Activated CD8-positive, alpha-beta T cell treated with anti-CD3 and anti-CD28 coated beads, Interleukin-2, amount 10 ng/mL, durations not matched to agents 7 days and 5 days (primary cell): ENCODE measurements at regions of chr20 and their contacts with region 1.

Region 1: GRCh38 chr20:35994994-35995453 is 26.6 kb downstream of the CNBD2 start:
- DNase-seq: peak; percentile 85
- ATAC-seq: peak; percentile 88
- H3K4me3 Mint-ChIP-seq: no peak overlapping the region
- H3K27ac Mint-ChIP-seq: no peak overlapping the region
- H3K4me1 Mint-ChIP-seq: peaks cover 2% of the 10 kb centered on the region
- H3K27me3 Mint-ChIP-seq: peaks cover 8% of the 10 kb centered on the region

Region 2: DNA sequence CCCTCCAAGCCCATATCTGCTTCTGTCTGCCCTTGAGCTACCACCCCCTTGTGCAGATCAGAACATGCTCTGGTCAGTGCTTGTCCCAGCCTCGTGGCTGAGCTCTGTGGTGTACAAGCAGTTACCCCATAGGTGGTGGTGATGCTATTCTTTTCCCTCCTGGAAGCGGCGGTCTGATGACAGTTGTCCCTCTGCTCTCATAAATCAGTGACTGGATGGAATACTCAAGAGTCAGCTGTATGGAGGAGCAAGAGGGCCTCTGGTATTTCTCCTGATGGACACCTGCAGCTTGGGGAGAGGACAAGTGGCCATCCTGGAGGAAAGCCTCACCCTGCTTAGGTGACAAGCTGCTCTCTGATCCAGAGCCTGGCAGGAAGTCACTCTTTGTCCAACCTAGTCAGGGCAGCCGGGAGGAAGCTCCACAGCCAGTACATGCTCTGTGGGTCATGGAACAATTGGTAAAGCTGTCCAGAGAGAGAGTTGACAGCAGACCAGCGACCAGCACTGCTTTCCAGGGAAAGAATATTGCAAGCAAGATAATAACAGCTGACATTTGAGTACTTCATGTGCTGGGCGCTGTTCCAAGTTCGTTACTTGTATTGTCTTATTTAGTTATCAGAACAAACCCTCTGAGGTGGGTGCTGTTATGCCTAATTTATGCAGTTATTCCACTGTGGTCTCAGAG is 87.9 kb before region 1 on chr20:
- CTCF ChIA-PET with region 1: no interaction called
- POLR2A ChIA-PET with region 1: no interaction called
- DNase-seq: no peak
- ATAC-seq: no peak
- H3K4me3 Mint-ChIP-seq: no peak overlapping the region
- H3K27ac Mint-ChIP-seq: no peak overlapping the region
- H3K4me1 Mint-ChIP-seq: peaks cover 12% of the 10 kb centered on the region
- H3K27me3 Mint-ChIP-seq: no peaks in the 10 kb centered on the region

Region 3: DNA sequence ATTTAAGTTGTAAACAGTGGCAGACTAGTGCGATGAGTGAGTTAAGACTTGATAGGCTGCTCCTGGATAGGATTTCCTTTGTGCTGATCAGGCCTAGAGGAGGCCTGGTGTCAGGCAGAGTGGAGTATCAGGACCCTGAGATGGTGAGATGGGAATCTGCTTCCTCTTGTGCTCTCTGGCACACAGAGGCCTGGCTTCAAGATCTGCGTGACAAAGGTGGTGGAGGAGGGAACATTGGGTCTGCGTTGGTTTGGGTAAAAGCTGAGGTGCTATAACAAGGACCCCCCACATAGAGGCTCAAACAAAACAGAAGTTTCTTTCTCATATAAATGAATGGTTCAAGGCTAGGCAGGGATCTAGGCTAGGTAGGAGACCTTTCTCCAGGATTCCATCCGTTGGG is 61.0 kb before region 1 on chr20:
- CTCF ChIA-PET with region 1: no interaction called
- POLR2A ChIA-PET with region 1: no interaction called
- DNase-seq: no peak
- ATAC-seq: no peak
- H3K4me3 Mint-ChIP-seq: no peak overlapping the region
- H3K27ac Mint-ChIP-seq: no peak overlapping the region
- H3K4me1 Mint-ChIP-seq: peaks cover 18% of the 10 kb centered on the region
- H3K27me3 Mint-ChIP-seq: no peaks in the 10 kb centered on the region

Region 4: GRCh38 chr20:35963878-35964277 is 31.1 kb before region 1 on chr20:
- CTCF ChIA-PET with region 1: interaction called, 12 read pairs
- POLR2A ChIA-PET with region 1: no interaction called
- DNase-seq: no peak
- ATAC-seq: no peak
- H3K4me3 Mint-ChIP-seq: no peak overlapping the region
- H3K27ac Mint-ChIP-seq: no peak overlapping the region
- H3K4me1 Mint-ChIP-seq: peaks cover 2% of the 10 kb centered on the region
- H3K27me3 Mint-ChIP-seq: peaks cover 4% of the 10 kb centered on the region

Region 5: DNA sequence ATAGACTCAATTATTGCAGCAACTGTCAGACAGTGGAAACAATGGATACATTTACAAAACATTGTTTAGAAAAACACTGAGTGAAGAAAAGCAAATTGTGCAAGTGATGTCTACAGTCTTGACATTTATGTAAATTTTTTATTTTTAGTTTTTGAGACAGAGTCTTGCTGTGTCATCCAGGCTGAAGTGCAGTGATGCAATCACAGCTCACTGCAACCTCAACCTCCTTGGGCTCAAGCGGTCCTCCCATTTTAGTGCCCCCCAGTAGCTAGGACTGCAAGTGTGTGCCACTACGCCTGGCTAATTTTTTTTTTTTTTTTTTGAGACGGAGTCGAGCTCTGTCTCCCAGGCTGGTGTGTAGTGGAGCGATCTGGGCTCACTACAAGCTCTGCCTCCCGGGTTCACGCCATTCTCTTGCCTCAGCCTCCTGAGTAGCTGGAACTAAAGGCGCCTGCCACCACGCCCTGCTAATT is 16.9 kb before region 1 on chr20:
- CTCF ChIA-PET with region 1: interaction called, 53 read pairs
- POLR2A ChIA-PET with region 1: no interaction called
- DNase-seq: no peak
- ATAC-seq: no peak
- H3K4me3 Mint-ChIP-seq: no peak overlapping the region
- H3K27ac Mint-ChIP-seq: no peak overlapping the region
- H3K4me1 Mint-ChIP-seq: no peaks in the 10 kb centered on the region
- H3K27me3 Mint-ChIP-seq: peaks cover 6% of the 10 kb centered on the region

Region 6: DNA sequence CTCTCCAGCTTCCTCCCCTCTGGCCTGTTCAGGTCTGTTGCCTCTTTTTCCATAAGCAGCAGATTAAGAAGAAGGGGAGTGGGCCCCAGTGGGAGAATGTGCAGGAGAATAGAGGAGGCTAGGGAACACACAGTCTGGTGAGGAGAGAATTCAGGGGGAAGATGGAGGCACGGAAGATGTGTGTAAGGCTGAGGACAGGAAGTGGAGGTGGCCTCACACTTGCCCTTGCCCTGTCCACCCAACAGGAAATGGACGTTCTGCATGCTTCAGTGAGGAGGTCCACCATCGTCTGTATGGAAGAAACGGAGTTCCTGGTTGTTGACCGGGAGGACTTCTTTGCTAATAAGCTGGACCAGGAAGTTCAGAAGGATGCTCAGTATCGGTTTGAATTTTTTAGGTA is 10.6 kb before region 1 on chr20:
- CTCF ChIA-PET with region 1: interaction called, 53 read pairs
- POLR2A ChIA-PET with region 1: no interaction called
- DNase-seq: no peak
- ATAC-seq: no peak
- H3K4me3 Mint-ChIP-seq: no peak overlapping the region
- H3K27ac Mint-ChIP-seq: no peak overlapping the region
- H3K4me1 Mint-ChIP-seq: no peaks in the 10 kb centered on the region
- H3K27me3 Mint-ChIP-seq: peaks cover 13% of the 10 kb centered on the region

Region 7: DNA sequence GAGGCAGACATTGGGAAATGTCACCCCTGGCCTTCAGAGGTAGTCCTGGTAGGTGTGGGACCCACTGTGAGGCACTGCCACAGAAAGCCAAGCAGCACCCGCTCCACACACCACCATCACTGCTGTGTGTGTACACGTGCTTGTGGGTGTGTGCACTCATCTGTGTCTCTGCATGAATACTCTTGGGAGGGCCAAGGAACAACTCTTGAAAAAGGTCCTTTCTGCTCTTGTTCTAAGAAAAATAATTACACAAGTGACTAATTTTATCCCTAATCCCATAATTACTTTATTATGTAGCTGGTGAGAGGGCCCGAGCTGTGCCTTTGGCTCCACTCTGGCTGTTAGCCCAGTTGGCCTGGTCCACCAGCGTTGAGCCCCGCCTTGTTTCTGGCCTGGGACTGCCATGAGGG is 137.8 kb after region 1 on chr20:
- CTCF ChIA-PET with region 1: interaction called, 288 read pairs
- POLR2A ChIA-PET with region 1: no interaction called
- DNase-seq: no peak
- ATAC-seq: no peak
- H3K4me3 Mint-ChIP-seq: no peak overlapping the region
- H3K27ac Mint-ChIP-seq: no peak overlapping the region
- H3K4me1 Mint-ChIP-seq: no peaks in the 10 kb centered on the region
- H3K27me3 Mint-ChIP-seq: no peaks in the 10 kb centered on the region

Region 8: GRCh38 chr20:36145877-36146707 is 151.1 kb after region 1 on chr20:
- CTCF ChIA-PET with region 1: interaction called, 288 read pairs
- POLR2A ChIA-PET with region 1: interaction called, 4 read pairs
- DNase-seq: no peak
- ATAC-seq: no peak
- H3K4me3 Mint-ChIP-seq: no peak overlapping the region
- H3K27ac Mint-ChIP-seq: no peak overlapping the region
- H3K4me1 Mint-ChIP-seq: peaks cover 14% of the 10 kb centered on the region
- H3K27me3 Mint-ChIP-seq: peaks cover 13% of the 10 kb centered on the region

Region 9: GRCh38 chr20:36154700-36155628 is 159.9 kb after region 1 on chr20 and contains the start of gene EPB41L1:
- CTCF ChIA-PET with region 1: interaction called, 16 read pairs
- POLR2A ChIA-PET with region 1: no interaction called
- DNase-seq: no peak
- ATAC-seq: no peak
- H3K4me3 Mint-ChIP-seq: peak within 1 kb of the TSS; percentile 7
- H3K27ac Mint-ChIP-seq: no peak within 1 kb of the TSS
- H3K4me1 Mint-ChIP-seq: no peaks in the 10 kb centered on the region
- H3K27me3 Mint-ChIP-seq: peaks cover 35% of the 10 kb centered on the region
- total RNA-seq, gene EPB41L1: not detected